Esophagus muscularis mucosa (tissue), 4 donors: ENCODE measurements at regions of chr2 and their contacts with region 1.

Region 1: DNA sequence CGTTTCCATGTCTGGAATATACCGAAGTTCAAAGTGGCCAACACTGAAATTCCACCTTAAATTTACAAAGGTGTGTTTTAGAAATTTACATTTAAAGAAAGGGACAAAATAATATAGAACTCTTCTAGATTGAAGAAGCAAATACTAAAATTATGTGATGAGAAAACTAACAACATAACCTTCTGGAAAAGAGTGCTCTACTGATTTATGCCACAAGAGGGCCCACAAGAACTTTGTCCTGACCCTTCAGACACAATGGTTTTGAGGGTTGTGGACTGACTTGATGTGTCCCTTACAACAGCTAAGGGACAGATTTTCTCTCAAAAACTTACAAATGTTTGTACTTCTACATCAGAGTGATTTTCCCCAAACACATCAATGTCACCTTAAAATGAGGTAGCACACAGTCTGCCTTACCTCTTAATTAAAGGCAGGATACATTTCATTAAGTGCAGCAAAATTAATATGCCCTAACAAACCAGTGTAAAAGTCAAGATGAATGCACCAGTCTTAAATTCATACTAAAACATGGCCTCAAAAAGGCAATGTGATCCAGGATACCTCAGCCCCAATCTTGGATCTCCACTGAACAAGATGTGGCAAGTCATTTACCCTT is 36.2 kb downstream of the EIF2AK3 start:
- DNase-seq: peak; percentile 19
- H3K4me3 ChIP-seq: no peak overlapping the region
- H3K27ac ChIP-seq: no peak overlapping the region
- H3K4me1 ChIP-seq: no peaks in the 10 kb centered on the region
- H3K27me3 ChIP-seq: no peaks in the 10 kb centered on the region
- CTCF ChIP-seq: peak; percentile 70 to 83 (median 74)
- EP300 ChIP-seq: no peak
- POLR2A ChIP-seq: no peak

Region 2: GRCh38 chr2:88669371-88670214 is 78.5 kb after region 1 on chr2:
- intact Hi-C with region 1: loop called (anchors 2 kb)
- DNase-seq: no peak
- H3K4me3 ChIP-seq: no peak overlapping the region
- H3K27ac ChIP-seq: no peak overlapping the region
- H3K4me1 ChIP-seq: peaks cover 0 to 6% (median 4%) of the 10 kb centered on the region in 4 donors
- H3K27me3 ChIP-seq: no peaks in the 10 kb centered on the region
- CTCF ChIP-seq: peak; percentile 31 to 49 (median 41)
- EP300 ChIP-seq: no peak
- POLR2A ChIP-seq: no peak

Region 3: GRCh38 chr2:88919087-88919738 is 328.1 kb after region 1 on chr2:
- intact Hi-C with region 1: no loop called
- DNase-seq: no peak
- H3K4me3 ChIP-seq: no peak overlapping the region
- H3K27ac ChIP-seq: no peak overlapping the region
- H3K4me1 ChIP-seq: no peaks in the 10 kb centered on the region
- H3K27me3 ChIP-seq: peaks cover 0 to 20% (median 0%) of the 10 kb centered on the region in 4 donors
- CTCF ChIP-seq: peak; percentile 21 to 50 (median 39)
- EP300 ChIP-seq: no peak
- POLR2A ChIP-seq: no peak